ENCODE measurements at regions of chr6 and their contacts with region 1.

Region 1: DNA sequence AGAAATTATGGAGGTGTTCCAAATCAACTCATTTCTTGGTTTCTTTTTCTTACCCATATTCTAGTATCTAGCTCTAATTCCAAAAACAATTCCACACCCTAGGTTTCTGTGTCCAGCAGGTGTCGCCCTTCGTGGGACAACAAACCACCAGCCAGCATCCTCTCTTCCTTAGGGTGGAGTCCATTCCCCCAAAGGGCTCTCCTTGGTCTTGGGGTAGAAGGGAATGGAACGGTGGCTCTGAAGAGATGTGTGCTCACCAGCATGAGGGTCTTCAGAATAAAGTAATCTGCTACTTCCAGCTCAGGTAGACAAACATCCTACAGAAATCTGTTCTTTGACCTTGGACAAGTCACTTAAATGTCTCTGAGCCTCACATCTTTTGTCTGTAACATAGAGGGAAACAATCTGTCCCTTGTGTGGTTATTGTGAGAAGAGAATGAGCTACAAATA is 7.2 kb downstream of the HLA-DMB start:
- DNase-seq: peak; percentile 38
- ATAC-seq: peak; percentile 70
- H3K4me3 ChIP-seq: no peak overlapping the region
- H3K27ac ChIP-seq: no peak overlapping the region
- H3K4me1 ChIP-seq: peaks cover 11% of the 10 kb centered on the region
- H3K27me3 ChIP-seq: no peaks in the 10 kb centered on the region; a peak in 1 of 4 replicates
- CTCF ChIP-seq: peak; percentile 75 to 85 (median 82)
- EP300 ChIP-seq: no peak
- POLR2A ChIP-seq: peak; percentile 46; the same call in 1 of the 2 replicates
- RAD21 ChIP-seq: peak; percentile 76

Region 2: DNA sequence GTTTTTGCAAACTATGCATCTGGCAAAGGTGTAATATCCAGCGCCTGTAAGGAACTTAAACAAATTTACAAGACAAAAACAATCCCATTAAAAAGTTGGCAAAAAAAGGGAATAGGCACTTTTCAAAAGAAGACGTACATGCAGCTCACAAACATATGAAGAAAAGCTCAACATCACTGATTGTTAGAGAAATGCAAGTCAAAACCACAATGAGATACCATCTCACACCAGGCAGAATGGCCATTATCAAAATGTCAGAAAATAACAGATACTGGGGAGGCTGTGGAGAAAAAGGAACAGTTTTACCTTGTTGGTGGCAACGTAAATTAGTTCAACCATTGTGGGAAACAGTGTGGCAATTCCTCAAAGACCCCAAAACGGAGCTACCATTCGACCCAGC is 616.1 kb before region 1 on chr6:
- CTCF ChIA-PET with region 1: no interaction called
- POLR2A ChIA-PET with region 1: no interaction called
- RAD21 ChIA-PET with region 1: no interaction called
- SMC1A ChIA-PET with region 1: no interaction called
- in situ Hi-C with region 1: no loop called
- intact Hi-C with region 1: no loop called
- DNase-seq: no peak
- ATAC-seq: no peak
- H3K4me3 ChIP-seq: no peak overlapping the region
- H3K27ac ChIP-seq: no peak overlapping the region
- H3K4me1 ChIP-seq: no peaks in the 10 kb centered on the region
- H3K27me3 ChIP-seq: peaks cover 0 to 5% of the 10 kb centered on the region in 2 experiments; a peak in 2 of 4 replicates
- CTCF ChIP-seq: no peak
- EP300 ChIP-seq: no peak
- POLR2A ChIP-seq: no peak
- RAD21 ChIP-seq: no peak

Region 3: DNA sequence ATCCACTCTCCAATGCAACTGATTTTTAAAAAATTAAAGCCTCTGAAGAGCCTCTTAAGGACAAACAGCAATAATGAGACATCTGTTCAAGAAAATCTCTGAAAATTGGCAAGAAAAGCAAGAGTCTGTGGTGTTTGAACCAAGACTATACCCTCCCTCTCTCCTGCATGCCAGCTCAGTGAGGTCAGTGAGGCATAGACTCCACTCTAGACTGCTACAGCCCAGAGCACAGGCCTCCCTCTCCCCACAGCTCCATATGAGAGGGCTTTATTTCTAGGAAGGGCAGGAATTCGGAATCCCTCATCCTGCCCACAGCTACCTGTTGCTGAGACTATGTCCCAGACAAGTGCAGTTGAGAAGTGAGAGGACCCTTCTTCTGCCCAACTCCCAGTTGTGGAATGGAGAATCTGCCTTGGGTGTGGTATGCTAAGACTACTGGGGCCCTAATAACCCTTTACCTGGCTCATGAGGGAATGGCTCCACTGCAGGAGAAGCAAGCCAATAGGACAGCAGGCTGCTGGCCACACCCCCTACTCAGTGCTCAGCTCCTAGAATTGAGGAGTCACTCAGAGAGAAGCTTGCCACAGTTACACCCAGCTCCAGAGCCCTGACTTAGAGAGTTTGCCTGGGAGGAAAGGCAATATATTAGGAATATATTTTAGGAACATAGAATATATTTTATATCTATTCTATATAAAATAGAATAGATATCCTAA is 319.1 kb before region 1 on chr6:
- CTCF ChIA-PET with region 1: no interaction called
- POLR2A ChIA-PET with region 1: no interaction called
- RAD21 ChIA-PET with region 1: no interaction called
- SMC1A ChIA-PET with region 1: no interaction called
- in situ Hi-C with region 1: no loop called
- intact Hi-C with region 1: no loop called
- DNase-seq: no peak
- ATAC-seq: no peak
- H3K4me3 ChIP-seq: no peak overlapping the region
- H3K27ac ChIP-seq: no peak overlapping the region
- H3K4me1 ChIP-seq: peaks cover 8% of the 10 kb centered on the region
- H3K27me3 ChIP-seq: no peaks in the 10 kb centered on the region
- CTCF ChIP-seq: no peak
- EP300 ChIP-seq: no peak
- POLR2A ChIP-seq: no peak
- RAD21 ChIP-seq: no peak

Region 4: DNA sequence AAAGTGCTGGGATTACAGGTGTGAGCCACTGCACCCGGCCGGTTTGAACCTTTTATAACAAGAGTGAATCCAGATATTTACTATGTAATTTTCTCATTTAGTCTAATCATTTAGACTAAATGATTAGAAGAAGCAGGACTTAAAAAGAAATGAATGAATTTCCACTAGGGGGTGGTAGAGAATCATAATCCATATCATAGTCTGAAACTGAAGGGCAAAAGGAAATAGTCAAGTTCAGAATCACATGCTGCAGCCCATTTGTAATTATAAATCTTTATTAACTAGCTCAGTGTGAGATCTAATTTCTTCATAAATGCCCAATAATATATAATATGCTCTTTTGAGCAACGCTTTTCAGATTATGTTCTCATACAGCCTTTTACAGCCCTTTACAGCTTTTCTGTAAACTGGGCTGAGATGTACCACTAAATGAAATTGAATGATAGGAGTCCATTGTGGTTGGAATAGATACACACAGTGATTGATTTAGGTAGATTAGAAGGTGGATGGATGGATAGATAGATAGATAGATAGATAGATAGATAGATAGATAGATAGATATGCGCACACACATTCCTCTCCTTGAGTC is 47.9 kb before region 1 on chr6:
- CTCF ChIA-PET with region 1: interaction called, 16 read pairs
- POLR2A ChIA-PET with region 1: interaction called, 3 read pairs
- RAD21 ChIA-PET with region 1: interaction called, 13 read pairs
- SMC1A ChIA-PET with region 1: interaction called, 13 read pairs
- in situ Hi-C with region 1: no loop called
- intact Hi-C with region 1: no loop called
- DNase-seq: peak; percentile 23
- ATAC-seq: peak; percentile 83
- H3K4me3 ChIP-seq: no peak overlapping the region
- H3K27ac ChIP-seq: no peak overlapping the region
- H3K4me1 ChIP-seq: 0 out of 2 replicates have a peak, but pooled peaks cover 3% of the 10 kb centered on the region
- H3K27me3 ChIP-seq: no peaks in the 10 kb centered on the region; a peak in 1 of 4 replicates
- CTCF ChIP-seq: peak; percentile 38 to 61 (median 43); a peak in 5 of 6 replicates
- EP300 ChIP-seq: no peak
- POLR2A ChIP-seq: no peak
- RAD21 ChIP-seq: peak; percentile 83

Region 5: GRCh38 chr6:32906539-32906938 is 27.1 kb before region 1 on chr6:
- CTCF ChIA-PET with region 1: interaction called, 21 read pairs
- POLR2A ChIA-PET with region 1: interaction called, 3 read pairs
- RAD21 ChIA-PET with region 1: interaction called, 3 read pairs
- SMC1A ChIA-PET with region 1: interaction called, 8 read pairs
- in situ Hi-C with region 1: no loop called
- intact Hi-C with region 1: no loop called
- DNase-seq: no peak
- ATAC-seq: no peak
- H3K4me3 ChIP-seq: no peak overlapping the region
- H3K27ac ChIP-seq: no peak overlapping the region
- H3K4me1 ChIP-seq: no peaks in the 10 kb centered on the region
- H3K27me3 ChIP-seq: no peaks in the 10 kb centered on the region
- CTCF ChIP-seq: no peak
- EP300 ChIP-seq: no peak
- POLR2A ChIP-seq: no peak
- RAD21 ChIP-seq: no peak

Region 6: GRCh38 chr6:32920715-32921114 is 12.9 kb before region 1 on chr6:
- CTCF ChIA-PET with region 1: interaction called, 51 read pairs
- POLR2A ChIA-PET with region 1: interaction called, 5 read pairs
- RAD21 ChIA-PET with region 1: interaction called, 4 read pairs
- SMC1A ChIA-PET with region 1: interaction called, 12 read pairs
- in situ Hi-C with region 1: no loop called
- intact Hi-C with region 1: no loop called
- DNase-seq: no peak
- ATAC-seq: peak; percentile 50
- H3K4me3 ChIP-seq: no peak overlapping the region
- H3K27ac ChIP-seq: no peak overlapping the region; the same call in 1 of the 2 replicates
- H3K4me1 ChIP-seq: peaks cover 14% of the 10 kb centered on the region
- H3K27me3 ChIP-seq: no peaks in the 10 kb centered on the region
- CTCF ChIP-seq: no peak
- EP300 ChIP-seq: no peak
- POLR2A ChIP-seq: no peak
- RAD21 ChIP-seq: no peak

Region 7: DNA sequence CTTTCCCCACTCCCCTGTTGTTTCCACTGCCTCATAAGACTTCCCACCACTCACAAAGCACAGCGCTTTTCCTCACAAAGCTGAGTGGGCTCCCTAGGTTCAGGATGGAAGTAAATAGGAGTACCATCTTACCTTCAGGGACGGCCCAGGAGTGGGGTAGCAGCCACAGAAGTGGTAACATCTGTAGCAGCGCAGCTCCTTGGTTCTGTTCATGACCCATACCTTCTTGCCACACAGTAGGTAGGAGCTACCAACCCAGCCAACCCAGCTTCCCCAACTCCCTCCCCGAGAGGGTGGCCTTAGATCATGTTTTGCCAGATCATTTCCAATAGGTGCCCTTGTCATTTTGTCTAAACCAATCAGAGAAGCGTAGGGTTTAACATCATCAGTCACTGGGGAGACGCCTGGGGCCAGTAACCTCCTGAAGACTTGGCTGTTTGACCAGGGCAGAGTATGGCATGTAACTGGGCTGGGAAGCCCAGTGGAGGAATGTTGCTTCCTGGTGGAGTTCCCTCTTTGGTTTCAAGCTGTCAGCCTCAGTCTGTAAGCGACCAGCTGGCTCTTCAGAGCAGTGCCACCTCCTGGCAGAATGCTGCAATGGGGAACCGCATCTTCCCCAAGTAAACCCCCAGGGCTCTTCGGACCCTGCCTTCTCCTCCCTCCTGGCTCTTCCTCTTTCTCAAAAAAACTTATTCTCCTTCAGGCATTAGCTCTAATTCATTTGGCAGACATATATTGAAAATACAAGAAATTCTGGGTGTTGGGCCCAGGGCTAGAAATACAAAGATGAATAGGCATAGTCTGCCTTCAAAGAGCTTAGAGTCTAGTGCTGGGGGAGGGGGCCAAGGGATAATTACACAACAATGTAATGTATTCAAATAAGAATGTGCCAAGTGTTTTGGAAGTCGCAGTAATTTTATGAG is 19.4 kb after region 1 on chr6 and contains the start of gene HLA-DMA:
- CTCF ChIA-PET with region 1: interaction called, 532 read pairs
- POLR2A ChIA-PET with region 1: interaction called, 183 read pairs
- RAD21 ChIA-PET with region 1: interaction called, 130 read pairs
- SMC1A ChIA-PET with region 1: interaction called, 354 read pairs
- in situ Hi-C with region 1: no loop called
- intact Hi-C with region 1: no loop called
- DNase-seq: peak; percentile 99
- ATAC-seq: peak; percentile 94
- H3K4me3 ChIP-seq: peak within 1 kb of the TSS; percentile 98
- H3K27ac ChIP-seq: peak within 1 kb of the TSS; percentile 90
- H3K4me1 ChIP-seq: peaks cover 44% of the 10 kb centered on the region
- H3K27me3 ChIP-seq: no peaks in the 10 kb centered on the region
- CTCF ChIP-seq: peak; percentile 71 to 77 (median 74)
- EP300 ChIP-seq: peak; percentile 32 to 67; a peak in 3 of 4 replicates
- POLR2A ChIP-seq: peak; percentile 98
- RAD21 ChIP-seq: peak; percentile 46
- polyA plus RNA-seq, gene HLA-DMA: 389 to 552 TPM

Measured in GM12878 (cell line).